H1 (cell line): ENCODE measurements at regions of chr1 and their contacts with region 1.

Region 1: GRCh38 chr1:160098852-160099561 is 588 bp upstream of the IGSF8 start:
- DNase-seq: peak; percentile 81 to 99
- H3K4me3 ChIP-seq: peak overlapping the region; percentile 33 to 56 (median 50); a peak in 7 of 8 replicates
- H3K27ac ChIP-seq: peak overlapping the region; percentile 21; the same call in 1 of the 2 replicates
- H3K4me1 ChIP-seq: peaks cover 12 to 50% (median 33%) of the 10 kb centered on the region in 4 experiments
- H3K27me3 ChIP-seq: no peaks in the 10 kb centered on the region
- CTCF ChIP-seq: no peak
- EP300 ChIP-seq: no peak
- POLR2A ChIP-seq: no peak
- RAD21 ChIP-seq: 0 out of 4 replicates have a peak, but pooled peaks of 1 of the 2 experiments have one; percentile 3

Region 2: DNA sequence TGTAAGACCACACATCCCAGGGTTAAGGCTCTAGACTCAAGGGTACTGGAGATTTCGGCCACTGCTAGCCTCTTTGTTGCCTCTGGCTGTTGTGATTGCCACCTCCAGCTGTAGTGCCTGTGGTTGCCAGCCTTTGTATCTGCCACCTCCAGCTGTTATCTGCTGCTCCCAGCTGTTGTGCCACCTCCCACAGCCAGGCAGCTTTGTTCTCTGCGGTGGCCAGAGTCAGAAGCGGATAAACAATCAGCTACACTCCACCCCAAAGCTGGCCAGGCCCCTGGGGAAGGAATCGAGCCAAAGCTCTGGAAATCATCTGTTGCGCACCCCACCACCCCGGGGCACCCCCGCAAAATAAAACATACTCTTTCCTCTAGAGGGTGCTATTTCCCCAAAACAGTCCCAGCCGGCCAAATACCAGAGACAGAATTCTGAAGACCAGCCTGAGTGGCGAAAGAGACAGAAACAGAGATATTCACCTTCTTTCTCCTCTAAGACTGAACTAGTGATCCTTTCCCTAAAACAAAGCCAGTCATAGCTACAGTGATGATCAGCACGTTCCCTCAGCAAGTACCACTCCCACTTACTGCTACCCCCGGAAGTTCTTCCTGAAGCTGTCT is 52.4 kb before region 1 on chr1:
- CTCF ChIA-PET with region 1: interaction called, 1,874 read pairs
- POLR2A ChIA-PET with region 1: interaction called, 3 read pairs
- DNase-seq: peak in 1 of 2 experiments; percentile 76
- H3K4me3 ChIP-seq: peak overlapping the region in 1 of 4 experiments; percentile 14; a peak in 2 of 8 replicates
- H3K27ac ChIP-seq: no peak overlapping the region
- H3K4me1 ChIP-seq: peaks cover 10 to 24% (median 16%) of the 10 kb centered on the region in 4 experiments
- H3K27me3 ChIP-seq: no peaks in the 10 kb centered on the region; a peak in 1 of 7 replicates
- CTCF ChIP-seq: peak; percentile 45 to 76 (median 69)
- EP300 ChIP-seq: peak in 1 of 2 experiments; percentile 17; a peak in 2 of 3 replicates
- POLR2A ChIP-seq: no peak
- RAD21 ChIP-seq: peak; percentile 71 to 80

Region 3: GRCh38 chr1:160085686-160086455 is 13.1 kb before region 1 on chr1:
- CTCF ChIA-PET with region 1: interaction called, 148 read pairs
- POLR2A ChIA-PET with region 1: interaction called, 39 read pairs
- DNase-seq: peak; percentile 88 to 96
- H3K4me3 ChIP-seq: no peak overlapping the region
- H3K27ac ChIP-seq: no peak overlapping the region
- H3K4me1 ChIP-seq: peaks cover 0 to 5% (median 3%) of the 10 kb centered on the region in 4 experiments; a peak in 4 of 7 replicates
- H3K27me3 ChIP-seq: peaks cover 0 to 35% (median 27%) of the 10 kb centered on the region in 4 experiments; a peak in 6 of 7 replicates
- CTCF ChIP-seq: peak; percentile 91 to 99 (median 95)
- EP300 ChIP-seq: no peak
- POLR2A ChIP-seq: no peak
- RAD21 ChIP-seq: peak; percentile 83 to 88

Region 4: GRCh38 chr1:160117709-160118183 is 18.7 kb after region 1 on chr1:
- CTCF ChIA-PET with region 1: interaction called, 256 read pairs
- POLR2A ChIA-PET with region 1: interaction called, 31 read pairs
- DNase-seq: no peak
- H3K4me3 ChIP-seq: peak overlapping the region in 1 of 4 experiments; percentile 59; a peak in 3 of 8 replicates
- H3K27ac ChIP-seq: no peak overlapping the region
- H3K4me1 ChIP-seq: peaks cover 15 to 44% (median 32%) of the 10 kb centered on the region in 4 experiments
- H3K27me3 ChIP-seq: no peaks in the 10 kb centered on the region; a peak in 1 of 7 replicates
- CTCF ChIP-seq: no peak
- EP300 ChIP-seq: no peak
- POLR2A ChIP-seq: no peak
- RAD21 ChIP-seq: no peak

Region 5: GRCh38 chr1:160161965-160162705 is 63.1 kb after region 1 on chr1:
- CTCF ChIA-PET with region 1: interaction called, 38 read pairs
- POLR2A ChIA-PET with region 1: interaction called, 3 read pairs
- DNase-seq: peak; percentile 54 to 73
- H3K4me3 ChIP-seq: no peak overlapping the region
- H3K27ac ChIP-seq: no peak overlapping the region
- H3K4me1 ChIP-seq: peaks cover 0 to 3% (median 1%) of the 10 kb centered on the region in 4 experiments; a peak in 3 of 7 replicates
- H3K27me3 ChIP-seq: no peaks in the 10 kb centered on the region; a peak in 2 of 7 replicates
- CTCF ChIP-seq: peak; percentile 87 to 98 (median 95)
- EP300 ChIP-seq: no peak
- POLR2A ChIP-seq: no peak
- RAD21 ChIP-seq: peak; percentile 93 to 96

Region 6: DNA sequence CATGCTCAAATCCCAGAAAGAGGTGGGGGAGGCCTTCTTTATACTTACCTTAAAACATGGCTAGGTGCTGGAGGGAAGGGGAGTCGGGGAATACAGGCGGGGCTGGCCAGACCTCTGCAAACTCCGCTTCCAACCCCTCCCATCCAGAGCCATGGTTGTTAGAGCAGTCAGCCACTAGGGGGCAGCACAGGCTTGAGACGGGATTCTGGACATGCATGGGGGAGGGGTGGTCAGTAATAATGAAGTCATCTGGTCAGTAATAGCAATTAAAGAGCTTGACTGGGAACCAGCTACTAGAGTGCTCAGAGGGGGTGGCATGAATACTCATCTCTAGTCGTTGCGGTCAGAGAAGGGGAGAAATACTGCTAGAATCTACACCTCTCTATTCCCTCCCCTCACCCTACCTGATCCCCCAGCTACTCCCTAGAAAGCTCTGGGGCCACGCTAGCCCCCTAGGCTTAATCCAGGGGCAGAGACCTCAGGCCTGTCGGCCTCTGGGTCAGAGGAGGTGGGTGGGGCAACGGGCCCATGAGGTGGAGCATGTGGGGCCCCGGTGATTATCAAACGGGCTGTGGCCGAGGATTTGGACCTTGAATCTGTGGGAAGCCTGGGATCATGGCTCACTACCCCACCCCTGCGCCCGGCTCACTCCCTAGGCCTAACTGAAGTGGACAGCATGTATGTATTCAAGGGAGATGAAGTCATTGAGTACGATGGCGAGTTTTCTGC is 94.2 kb after region 1 on chr1:
- CTCF ChIA-PET with region 1: interaction called, 21 read pairs
- POLR2A ChIA-PET with region 1: no interaction called
- DNase-seq: peak; percentile 84 to 98
- H3K4me3 ChIP-seq: 0 out of 8 replicates have a peak overlapping the region, but pooled peaks of 1 of the 4 experiments have one; percentile 12
- H3K27ac ChIP-seq: no peak overlapping the region
- H3K4me1 ChIP-seq: peaks cover 3 to 26% (median 8%) of the 10 kb centered on the region in 4 experiments; a peak in 6 of 7 replicates
- H3K27me3 ChIP-seq: no peaks in the 10 kb centered on the region; a peak in 1 of 7 replicates
- CTCF ChIP-seq: peak; percentile 94 to 95 (median 94)
- EP300 ChIP-seq: no peak
- POLR2A ChIP-seq: no peak
- RAD21 ChIP-seq: peak; percentile 95 to 96

Region 7: GRCh38 chr1:160251687-160252526 is 152.9 kb after region 1 on chr1:
- CTCF ChIA-PET with region 1: interaction called, 73 read pairs
- POLR2A ChIA-PET with region 1: interaction called, 3 read pairs
- DNase-seq: no peak
- H3K4me3 ChIP-seq: no peak overlapping the region
- H3K27ac ChIP-seq: no peak overlapping the region
- H3K4me1 ChIP-seq: no peaks in the 10 kb centered on the region; a peak in 1 of 7 replicates
- H3K27me3 ChIP-seq: no peaks in the 10 kb centered on the region
- CTCF ChIP-seq: peak in 2 of 3 experiments; percentile 76 to 78; a peak in 3 of 4 replicates
- EP300 ChIP-seq: no peak
- POLR2A ChIP-seq: no peak
- RAD21 ChIP-seq: peak; percentile 84 to 91